Posterior vena cava (tissue), 2 donors: ENCODE measurements at regions of chr12 and their contacts with region 1.

Region 1: DNA sequence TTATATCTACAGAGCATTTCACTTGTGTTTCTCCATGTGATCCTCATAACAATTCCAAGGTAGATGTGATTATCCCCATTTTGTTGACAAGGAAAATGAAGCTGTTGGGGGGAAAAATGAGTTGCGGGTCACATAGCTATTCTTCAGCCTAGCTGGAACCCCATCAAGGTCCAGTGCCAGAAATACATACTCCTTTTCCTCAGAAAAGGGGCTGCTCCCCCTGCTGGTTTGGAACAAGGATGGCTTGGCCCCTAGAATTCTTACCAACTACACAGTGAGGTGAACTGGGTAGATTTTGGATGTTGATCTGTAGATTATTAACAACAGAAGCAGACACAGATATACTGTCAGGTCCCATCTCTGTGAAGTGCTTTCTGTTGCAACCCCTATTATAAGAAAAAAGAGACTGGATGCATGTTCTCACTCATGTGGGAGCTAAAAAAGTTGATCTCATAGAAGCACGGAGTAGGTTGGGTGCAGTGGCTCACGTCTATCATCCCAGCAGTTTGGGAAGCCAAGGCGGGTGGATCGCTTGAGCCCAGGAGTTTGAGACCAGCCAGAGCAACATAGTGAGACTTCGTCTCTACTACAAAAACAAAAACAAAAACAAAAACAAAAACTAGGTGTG is 8.9 kb downstream of the IKZF4 start:
- DNase-seq: no peak

Region 2: DNA sequence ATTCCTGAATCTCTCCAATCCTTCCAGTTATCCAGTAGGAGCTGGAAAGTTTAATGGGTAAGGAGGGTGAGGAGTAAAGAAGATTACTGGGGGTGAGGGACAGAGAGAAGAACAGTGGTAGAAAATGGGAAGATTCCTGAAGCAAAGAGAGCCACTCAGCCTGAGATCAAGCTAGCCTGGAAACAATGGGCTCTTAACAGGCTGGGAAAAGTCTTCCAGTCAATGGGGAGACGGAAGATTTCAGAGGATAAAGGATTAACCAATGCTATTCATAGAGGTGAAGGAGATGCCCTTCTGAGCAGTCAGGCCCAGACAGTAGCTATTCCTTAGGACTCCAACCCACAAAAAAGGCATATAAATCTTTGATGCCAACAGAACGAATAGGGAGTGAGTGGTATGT is 272.1 kb before region 1 on chr12:
- intact Hi-C with region 1: loop called in 1 of 2 experiments (anchors 10 kb)
- DNase-seq: no peak

Region 3: DNA sequence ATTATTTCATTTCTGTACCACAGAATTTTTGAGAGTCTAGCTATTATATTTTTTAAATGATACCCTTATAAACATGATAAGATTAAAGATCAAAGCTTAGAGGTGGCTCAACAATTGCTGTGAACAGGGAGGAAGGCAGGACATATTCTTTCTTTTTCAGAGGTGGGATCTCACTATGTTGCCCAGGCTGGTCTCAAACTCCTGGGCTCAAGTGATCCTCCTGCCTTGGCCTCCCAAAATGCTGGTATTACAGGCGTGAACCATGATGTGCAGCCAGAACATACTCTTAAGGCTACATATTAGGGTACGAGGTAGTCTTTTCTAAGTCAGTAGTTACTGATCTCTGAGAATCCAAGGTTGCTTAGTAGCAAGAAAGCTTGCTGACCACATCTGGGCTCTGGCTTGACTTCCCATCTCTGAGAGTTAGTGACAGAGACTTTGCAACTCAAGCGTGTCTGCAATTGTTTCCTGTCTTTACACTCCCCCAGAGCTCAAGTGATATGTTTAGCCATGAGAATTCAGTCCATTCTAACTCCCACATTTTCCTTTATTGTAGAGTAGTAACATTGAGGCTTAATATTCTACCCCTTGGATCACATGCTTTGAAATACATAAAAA is 47.4 kb before region 1 on chr12:
- intact Hi-C with region 1: loop called in 1 of 2 experiments (anchors 10 kb)
- DNase-seq: no peak